CD8-positive, alpha-beta T cell (primary cell): ENCODE measurements at regions of chr17 and their contacts with region 1.

Region 1: GRCh38 chr17:8248751-8249607 is at the start of gene PFAS:
- DNase-seq: peak; percentile 92 to 98 (median 96)
- ATAC-seq: peak; percentile 39
- H3K4me3 ChIP-seq: peak within 1 kb of the TSS; percentile 84 to 95
- H3K4me3 Mint-ChIP-seq: peak within 1 kb of the TSS; percentile 98
- H3K27ac ChIP-seq: peak within 1 kb of the TSS; percentile 97 to 98
- H3K27ac Mint-ChIP-seq: peak within 1 kb of the TSS; percentile 100
- H3K4me1 ChIP-seq: peaks cover 34% of the 10 kb centered on the region
- H3K4me1 Mint-ChIP-seq: peaks cover 48% of the 10 kb centered on the region
- H3K27me3 ChIP-seq: no peaks in the 10 kb centered on the region
- H3K27me3 Mint-ChIP-seq: no peaks in the 10 kb centered on the region
- CTCF ChIP-seq: no peak
- total RNA-seq, gene PFAS: 23.8 to 25.0 TPM

Region 2: DNA sequence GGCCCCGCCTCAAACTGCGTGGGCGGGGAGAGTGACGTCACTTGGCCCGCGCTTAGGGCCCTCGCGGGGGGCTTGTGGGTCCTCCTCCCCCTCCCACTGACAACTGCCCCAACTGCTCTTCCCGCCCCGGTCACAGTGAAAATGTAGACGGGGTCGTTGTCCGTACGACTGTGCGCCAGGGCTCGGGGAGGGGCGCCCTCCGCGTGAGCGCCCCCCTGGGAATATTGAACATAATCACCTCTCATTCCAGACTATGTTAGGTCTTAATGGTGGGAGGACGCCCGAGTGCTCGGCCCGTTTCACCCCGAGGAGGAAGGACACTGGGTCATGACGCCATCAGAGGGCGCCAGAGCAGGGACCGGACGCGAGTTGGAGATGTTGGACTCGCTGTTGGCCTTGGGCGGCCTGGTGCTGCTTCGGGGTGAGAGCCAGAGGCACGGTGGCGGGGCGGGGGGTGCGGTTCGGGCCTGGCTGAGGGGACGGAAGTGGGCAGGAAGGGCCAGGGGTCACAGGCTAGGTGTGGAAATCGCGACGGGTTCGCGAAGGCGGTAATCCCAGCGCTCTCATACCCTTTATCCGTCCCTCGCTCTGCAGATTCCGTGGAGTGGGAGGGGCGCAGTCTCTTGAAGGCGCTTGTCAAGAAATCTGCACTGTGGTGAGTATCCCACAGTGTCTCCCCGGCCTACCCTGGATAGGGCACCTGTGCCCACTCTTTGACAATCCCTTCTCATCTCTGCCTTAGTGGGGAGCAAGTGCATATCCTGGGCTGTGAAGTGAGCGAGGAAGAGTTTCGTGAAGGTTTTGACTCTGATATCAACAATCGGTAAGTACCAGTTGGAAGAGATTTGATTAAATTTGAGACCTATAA is 996.6 kb before region 1 on chr17 and contains the start of gene ELP5:
- CTCF ChIA-PET with region 1: no interaction called
- POLR2A ChIA-PET with region 1: no interaction called
- intact Hi-C with region 1: loop called in 1 of 2 experiments (anchors 5 kb)
- DNase-seq: peak; percentile 73 to 99 (median 87)
- ATAC-seq: peak; percentile 48
- H3K4me3 ChIP-seq: peak within 1 kb of the TSS; percentile 81 to 92
- H3K4me3 Mint-ChIP-seq: peak within 1 kb of the TSS; percentile 97
- H3K27ac ChIP-seq: peak within 1 kb of the TSS; percentile 99
- H3K27ac Mint-ChIP-seq: peak within 1 kb of the TSS; percentile 100
- H3K4me1 ChIP-seq: peaks cover 31% of the 10 kb centered on the region
- H3K4me1 Mint-ChIP-seq: peaks cover 44% of the 10 kb centered on the region
- H3K27me3 ChIP-seq: no peaks in the 10 kb centered on the region
- H3K27me3 Mint-ChIP-seq: no peaks in the 10 kb centered on the region
- CTCF ChIP-seq: no peak
- total RNA-seq, gene ELP5: 38.9 to 39.0 TPM

Region 3: DNA sequence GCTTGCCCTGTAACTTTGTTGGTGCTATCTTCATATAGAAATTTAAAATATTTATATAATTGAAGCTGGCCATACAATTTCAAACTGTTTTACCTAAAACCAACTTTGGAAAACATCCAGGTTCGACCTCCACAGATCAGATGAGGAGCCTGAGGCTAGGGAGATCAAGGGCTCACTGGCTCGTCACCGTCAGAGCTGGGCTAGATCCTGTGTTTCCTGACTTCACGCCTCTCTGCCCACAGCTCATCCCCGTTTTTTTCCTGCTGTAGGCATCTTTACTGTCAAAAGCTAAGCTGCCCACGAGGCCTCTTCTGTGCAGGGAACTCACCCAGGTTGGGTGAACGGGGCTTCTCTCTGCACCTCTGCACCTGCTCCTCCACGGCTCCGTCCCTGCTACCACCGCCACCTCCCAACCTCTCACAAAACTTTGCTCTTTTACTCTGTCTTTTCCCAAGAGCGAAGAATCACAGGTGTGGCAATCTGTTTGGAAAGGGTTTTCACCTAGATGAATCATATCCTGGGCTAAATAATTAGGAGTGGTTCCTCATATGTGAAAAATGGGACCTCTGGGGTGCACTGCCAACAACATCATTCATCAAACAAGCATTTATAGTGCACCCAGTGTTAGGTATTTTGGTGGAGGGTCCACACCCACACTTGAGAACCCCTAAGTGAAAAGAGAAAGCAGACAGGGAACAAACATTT is 439.7 kb before region 1 on chr17:
- CTCF ChIA-PET with region 1: no interaction called
- POLR2A ChIA-PET with region 1: no interaction called
- intact Hi-C with region 1: no loop called
- DNase-seq: no peak
- ATAC-seq: no peak
- H3K4me3 ChIP-seq: no peak overlapping the region
- H3K4me3 Mint-ChIP-seq: no peak overlapping the region
- H3K27ac ChIP-seq: no peak overlapping the region
- H3K27ac Mint-ChIP-seq: no peak overlapping the region
- H3K4me1 ChIP-seq: peaks cover 4% of the 10 kb centered on the region
- H3K4me1 Mint-ChIP-seq: peaks cover 6% of the 10 kb centered on the region
- H3K27me3 ChIP-seq: peaks cover 0 to 5% of the 10 kb centered on the region in 2 experiments
- H3K27me3 Mint-ChIP-seq: peaks cover 8% of the 10 kb centered on the region
- CTCF ChIP-seq: no peak

Region 4: GRCh38 chr17:8138672-8139371 is 110.2 kb before region 1 on chr17:
- CTCF ChIA-PET with region 1: interaction called, 4 read pairs
- POLR2A ChIA-PET with region 1: interaction called, 4 read pairs
- intact Hi-C with region 1: loop called (anchors 1 to 5 kb)
- DNase-seq: peak; percentile 92 to 98 (median 95)
- ATAC-seq: peak; percentile 84
- H3K4me3 ChIP-seq: peak overlapping the region; percentile 70 to 75
- H3K4me3 Mint-ChIP-seq: no peak overlapping the region
- H3K27ac ChIP-seq: peak overlapping the region; percentile 89 to 97
- H3K27ac Mint-ChIP-seq: no peak overlapping the region
- H3K4me1 ChIP-seq: peaks cover 18% of the 10 kb centered on the region
- H3K4me1 Mint-ChIP-seq: no peaks in the 10 kb centered on the region
- H3K27me3 ChIP-seq: no peaks in the 10 kb centered on the region
- H3K27me3 Mint-ChIP-seq: no peaks in the 10 kb centered on the region
- CTCF ChIP-seq: peak; percentile 87

Region 5: DNA sequence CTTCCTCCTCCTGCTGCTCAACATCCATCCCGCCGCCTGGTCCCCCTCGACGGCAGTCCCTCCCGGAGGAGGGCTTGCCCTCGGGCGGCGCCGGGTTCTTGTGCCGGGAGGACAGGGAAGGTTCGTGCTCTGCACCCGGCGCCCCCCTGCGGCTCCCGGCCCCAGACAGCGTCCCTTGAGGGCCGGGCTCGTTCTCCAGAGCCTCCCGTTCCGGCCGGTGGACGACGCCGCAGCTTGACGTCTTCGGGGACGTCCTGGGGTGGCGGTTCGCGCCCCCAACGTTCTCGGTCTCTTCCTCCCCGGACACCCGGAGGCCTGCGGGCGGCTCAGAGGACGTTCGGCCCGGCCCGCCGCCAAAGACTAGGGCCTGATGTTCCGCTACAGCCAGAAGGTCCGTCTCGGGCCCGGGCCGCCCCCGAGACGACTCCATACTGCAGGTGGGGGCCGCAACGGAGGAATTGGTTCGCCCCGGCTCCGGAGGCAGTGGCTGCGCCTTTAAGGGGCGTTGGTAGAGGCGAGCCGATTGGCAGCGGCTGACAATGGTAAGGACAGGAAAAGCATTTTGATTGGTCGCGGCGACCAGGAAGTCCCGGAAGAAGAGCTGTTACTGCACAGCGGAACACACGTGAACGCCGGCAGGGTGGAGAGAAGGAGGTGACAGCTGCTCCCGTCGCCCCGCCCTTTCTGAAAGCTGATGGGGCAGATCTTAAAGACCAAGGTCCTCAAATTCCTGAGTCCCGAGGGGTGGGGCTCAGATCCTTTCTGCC is 59.1 kb before region 1 on chr17 and contains the start of gene BORCS6:
- CTCF ChIA-PET with region 1: interaction called, 7 read pairs
- POLR2A ChIA-PET with region 1: interaction called, 51 read pairs
- intact Hi-C with region 1: loop called (anchors 1 kb)
- DNase-seq: peak; percentile 87 to 99 (median 93)
- ATAC-seq: peak; percentile 69
- H3K4me3 ChIP-seq: peak within 1 kb of the TSS; percentile 95 to 98
- H3K4me3 Mint-ChIP-seq: peak within 1 kb of the TSS; percentile 1
- H3K27ac ChIP-seq: peak within 1 kb of the TSS; percentile 63 to 93
- H3K27ac Mint-ChIP-seq: peak within 1 kb of the TSS; percentile 94
- H3K4me1 ChIP-seq: peaks cover 38% of the 10 kb centered on the region
- H3K4me1 Mint-ChIP-seq: peaks cover 13% of the 10 kb centered on the region
- H3K27me3 ChIP-seq: no peaks in the 10 kb centered on the region
- H3K27me3 Mint-ChIP-seq: no peaks in the 10 kb centered on the region
- CTCF ChIP-seq: no peak
- total RNA-seq, gene BORCS6: 6.1 to 6.7 TPM

Region 6: GRCh38 chr17:8288336-8289102 is 39.5 kb after region 1 on chr17 and contains the start of gene RANGRF:
- CTCF ChIA-PET with region 1: interaction called, 3 read pairs
- POLR2A ChIA-PET with region 1: interaction called, 39 read pairs
- intact Hi-C with region 1: loop called (anchors 1 kb)
- DNase-seq: peak; percentile 38 to 89 (median 79)
- ATAC-seq: peak; percentile 94
- H3K4me3 ChIP-seq: peak within 1 kb of the TSS; percentile 73 to 82
- H3K4me3 Mint-ChIP-seq: peak within 1 kb of the TSS; percentile 97
- H3K27ac ChIP-seq: peak within 1 kb of the TSS; percentile 77 to 89
- H3K27ac Mint-ChIP-seq: peak within 1 kb of the TSS; percentile 97
- H3K4me1 ChIP-seq: peaks cover 17% of the 10 kb centered on the region
- H3K4me1 Mint-ChIP-seq: peaks cover 39% of the 10 kb centered on the region
- H3K27me3 ChIP-seq: no peaks in the 10 kb centered on the region
- H3K27me3 Mint-ChIP-seq: no peaks in the 10 kb centered on the region
- CTCF ChIP-seq: no peak
- total RNA-seq, gene RANGRF: 18.9 to 20.2 TPM

Region 7: DNA sequence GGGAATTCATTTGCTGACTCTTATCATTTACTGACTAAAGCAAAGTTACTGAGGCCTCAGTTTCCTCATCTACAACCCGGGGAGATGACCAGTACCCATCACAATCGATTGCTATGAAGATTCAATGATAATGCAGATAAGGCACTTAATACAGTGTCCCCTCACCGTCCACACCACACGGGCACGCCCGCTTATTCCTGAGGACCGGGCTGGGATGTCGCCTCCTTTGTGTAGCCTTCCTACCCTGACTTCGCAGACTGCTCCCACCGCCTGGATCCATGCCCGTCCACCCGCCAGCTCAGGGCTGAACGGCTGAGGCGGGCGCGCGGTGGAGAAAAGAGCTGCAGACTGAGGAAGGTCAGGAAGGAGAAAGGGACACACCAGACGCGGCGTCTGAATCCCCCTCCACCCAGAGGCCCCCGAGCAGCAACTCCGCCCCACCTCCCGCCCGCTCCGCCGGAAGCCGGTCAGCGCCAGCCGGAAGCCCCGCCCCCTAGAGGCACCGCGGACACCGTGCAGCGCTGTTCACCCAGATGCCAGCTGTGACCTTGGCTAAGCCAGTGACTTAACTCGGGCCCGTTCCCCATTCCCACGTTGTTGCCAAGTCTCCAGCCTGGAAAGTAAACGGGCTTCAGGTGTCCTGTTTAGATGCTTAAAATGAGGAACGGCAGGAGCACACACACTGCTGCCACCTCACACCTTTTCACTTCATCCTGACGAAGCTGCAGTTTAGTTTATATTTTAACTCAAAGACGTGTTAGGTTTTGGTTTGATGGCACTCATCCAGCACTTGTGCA is 127.5 kb after region 1 on chr17 and contains the start of gene KRABD2:
- CTCF ChIA-PET with region 1: no interaction called
- POLR2A ChIA-PET with region 1: no interaction called
- intact Hi-C with region 1: loop called in 1 of 2 experiments (anchors 2 kb)
- DNase-seq: peak; percentile 81 to 93 (median 92)
- ATAC-seq: peak; percentile 100
- H3K4me3 ChIP-seq: peak within 1 kb of the TSS; percentile 71 to 91
- H3K4me3 Mint-ChIP-seq: peak within 1 kb of the TSS; percentile 90
- H3K27ac ChIP-seq: peak within 1 kb of the TSS; percentile 63 to 64
- H3K27ac Mint-ChIP-seq: peak within 1 kb of the TSS; percentile 88
- H3K4me1 ChIP-seq: peaks cover 35% of the 10 kb centered on the region
- H3K4me1 Mint-ChIP-seq: peaks cover 49% of the 10 kb centered on the region
- H3K27me3 ChIP-seq: no peaks in the 10 kb centered on the region
- H3K27me3 Mint-ChIP-seq: no peaks in the 10 kb centered on the region
- CTCF ChIP-seq: peak; percentile 47

Region 8: GRCh38 chr17:8556074-8556473 is 307.1 kb after region 1 on chr17:
- CTCF ChIA-PET with region 1: no interaction called
- POLR2A ChIA-PET with region 1: no interaction called
- intact Hi-C with region 1: no loop called
- DNase-seq: no peak
- ATAC-seq: no peak
- H3K4me3 ChIP-seq: no peak overlapping the region
- H3K4me3 Mint-ChIP-seq: no peak overlapping the region
- H3K27ac ChIP-seq: no peak overlapping the region
- H3K27ac Mint-ChIP-seq: no peak overlapping the region
- H3K4me1 ChIP-seq: no peaks in the 10 kb centered on the region
- H3K4me1 Mint-ChIP-seq: no peaks in the 10 kb centered on the region
- H3K27me3 ChIP-seq: peaks cover 0 to 5% of the 10 kb centered on the region in 2 experiments
- H3K27me3 Mint-ChIP-seq: peaks cover 5% of the 10 kb centered on the region
- CTCF ChIP-seq: no peak

Region 9: DNA sequence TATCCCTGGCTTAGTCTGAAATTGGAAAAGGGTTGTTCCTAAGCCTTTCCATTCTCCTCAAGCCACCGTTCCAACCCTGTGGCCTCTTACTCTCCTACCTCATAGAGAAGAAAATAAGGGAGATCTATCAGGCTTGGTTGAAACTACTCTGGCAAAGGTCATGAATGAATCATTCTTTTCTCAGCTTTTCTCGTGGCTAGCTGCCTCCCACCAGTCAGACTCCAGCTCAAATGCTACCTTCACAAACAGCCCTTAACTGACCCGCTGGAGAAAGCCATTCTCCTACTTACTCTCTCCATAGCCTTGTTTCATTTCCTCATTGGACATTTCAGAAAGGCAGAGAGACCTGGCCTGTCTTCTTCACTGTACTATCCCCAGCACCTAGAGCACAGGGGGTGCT is 372.6 kb after region 1 on chr17:
- CTCF ChIA-PET with region 1: no interaction called
- POLR2A ChIA-PET with region 1: no interaction called
- intact Hi-C with region 1: no loop called
- DNase-seq: no peak
- ATAC-seq: no peak
- H3K4me3 ChIP-seq: no peak overlapping the region
- H3K4me3 Mint-ChIP-seq: no peak overlapping the region
- H3K27ac ChIP-seq: no peak overlapping the region
- H3K27ac Mint-ChIP-seq: no peak overlapping the region
- H3K4me1 ChIP-seq: no peaks in the 10 kb centered on the region
- H3K4me1 Mint-ChIP-seq: no peaks in the 10 kb centered on the region
- H3K27me3 ChIP-seq: peaks cover 0 to 5% of the 10 kb centered on the region in 2 experiments
- H3K27me3 Mint-ChIP-seq: peaks cover 11% of the 10 kb centered on the region
- CTCF ChIP-seq: no peak